Activated CD4-positive, alpha-beta memory T cell treated with anti-CD3 and anti-CD28 coated beads for 36 hours (primary cell): ENCODE measurements at regions of chr14 and their contacts with region 1.

Region 1: GRCh38 chr14:81220830-81221578 is at the start of gene GTF2A1:
- DNase-seq: peak; percentile 96
- H3K4me3 Mint-ChIP-seq: peak within 1 kb of the TSS; percentile 96
- H3K27ac Mint-ChIP-seq: peak within 1 kb of the TSS; percentile 97
- H3K4me1 Mint-ChIP-seq: peaks cover 34% of the 10 kb centered on the region
- H3K27me3 Mint-ChIP-seq: peaks cover 2% of the 10 kb centered on the region
- total RNA-seq, gene GTF2A1: 38.9 to 40.1 TPM

Region 2: GRCh38 chr14:80930836-80931389 is 290.1 kb before region 1 on chr14:
- CTCF ChIA-PET with region 1: no interaction called
- POLR2A ChIA-PET with region 1: interaction called, 4 read pairs
- intact Hi-C with region 1: loop called (anchors 1 kb)
- DNase-seq: peak; percentile 80
- H3K4me3 Mint-ChIP-seq: peak overlapping the region; percentile 54
- H3K27ac Mint-ChIP-seq: peak overlapping the region; percentile 82
- H3K4me1 Mint-ChIP-seq: peaks cover 41% of the 10 kb centered on the region
- H3K27me3 Mint-ChIP-seq: no peaks in the 10 kb centered on the region

Region 3: DNA sequence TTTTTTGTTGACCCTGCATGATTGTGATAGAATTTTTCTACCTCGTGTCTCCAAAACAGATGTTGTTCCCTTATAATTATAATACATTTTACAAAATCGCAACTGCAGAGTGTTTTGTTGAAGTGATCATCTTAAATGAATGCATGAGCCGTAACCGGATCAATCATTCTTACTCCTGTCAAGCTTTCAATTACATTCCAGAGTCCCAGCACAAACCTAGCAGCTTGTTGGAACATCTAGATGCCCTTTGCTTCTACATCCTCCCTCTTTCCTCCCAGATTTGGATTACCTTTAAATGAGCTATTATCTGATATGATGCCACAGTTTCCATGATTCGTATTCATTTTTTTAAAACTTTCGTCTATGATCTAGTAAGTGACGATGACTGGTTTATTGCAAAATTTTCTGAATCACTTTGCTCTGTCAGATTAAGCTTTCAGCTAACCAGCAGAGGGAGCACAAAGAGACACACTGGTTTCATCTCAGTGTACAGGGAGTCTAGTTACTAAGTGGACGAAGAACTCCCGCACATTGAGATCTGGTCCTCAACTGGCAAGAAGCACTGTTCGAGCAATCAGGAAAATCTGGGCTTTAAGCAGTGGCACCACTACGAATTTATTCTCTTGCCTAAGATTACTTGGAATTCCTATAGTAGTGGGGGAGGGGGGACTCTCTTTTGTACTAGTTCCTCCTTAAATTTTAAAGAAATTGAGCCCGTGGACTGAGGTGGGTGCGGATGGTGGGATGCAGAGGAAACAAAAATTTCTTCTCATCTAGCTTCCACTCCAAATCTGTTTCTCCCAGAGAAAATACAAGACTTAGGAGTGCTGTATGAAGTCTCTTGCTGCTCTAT is 224.7 kb before region 1 on chr14:
- CTCF ChIA-PET with region 1: interaction called, 5 read pairs
- POLR2A ChIA-PET with region 1: no interaction called
- intact Hi-C with region 1: loop called (anchors 5 kb)
- DNase-seq: peak; percentile 20
- H3K4me3 Mint-ChIP-seq: no peak overlapping the region
- H3K27ac Mint-ChIP-seq: no peak overlapping the region
- H3K4me1 Mint-ChIP-seq: peaks cover 7% of the 10 kb centered on the region
- H3K27me3 Mint-ChIP-seq: peaks cover 15% of the 10 kb centered on the region

Region 4: DNA sequence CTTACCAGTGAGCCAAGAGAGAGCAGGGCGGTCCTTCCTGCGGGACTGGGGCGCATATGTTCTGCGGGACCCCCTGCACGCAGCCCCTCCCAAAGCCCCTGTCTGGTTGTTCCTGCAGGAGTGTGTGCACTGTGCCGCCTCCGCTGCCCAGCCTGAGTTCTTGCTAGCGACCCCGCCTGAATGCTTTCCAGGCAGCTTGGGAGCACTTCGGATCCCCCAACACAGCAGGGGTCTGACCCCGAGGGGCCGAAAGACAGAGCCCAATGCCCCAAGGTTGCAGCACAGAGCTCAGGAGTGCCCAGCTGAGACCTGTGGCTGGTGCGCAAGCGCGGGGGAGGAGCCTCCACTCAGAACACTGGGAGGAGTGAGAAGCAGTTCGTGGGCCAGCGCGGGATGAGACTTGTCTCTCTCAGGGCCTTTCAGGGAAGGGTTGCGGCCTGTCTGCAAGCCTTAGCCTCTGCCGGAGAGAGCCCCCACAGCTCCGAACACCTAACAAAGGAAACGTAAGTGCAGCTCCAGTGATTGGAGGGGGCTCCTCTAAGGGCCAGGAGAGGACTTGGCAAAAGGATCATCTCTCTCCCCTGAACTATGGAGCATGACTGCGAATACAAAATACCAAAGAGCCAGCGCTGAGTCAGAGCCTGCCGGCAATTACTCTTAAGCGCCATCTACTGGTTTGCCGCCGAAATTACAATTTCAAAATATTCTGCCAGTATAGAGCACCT is 50.7 kb before region 1 on chr14:
- CTCF ChIA-PET with region 1: interaction called, 5 read pairs
- POLR2A ChIA-PET with region 1: interaction called, 7 read pairs
- intact Hi-C with region 1: loop called (anchors 1 kb)
- DNase-seq: peak; percentile 92
- H3K4me3 Mint-ChIP-seq: peak overlapping the region; percentile 85
- H3K27ac Mint-ChIP-seq: peak overlapping the region; percentile 93
- H3K4me1 Mint-ChIP-seq: peaks cover 17% of the 10 kb centered on the region
- H3K27me3 Mint-ChIP-seq: no peaks in the 10 kb centered on the region

Region 5: DNA sequence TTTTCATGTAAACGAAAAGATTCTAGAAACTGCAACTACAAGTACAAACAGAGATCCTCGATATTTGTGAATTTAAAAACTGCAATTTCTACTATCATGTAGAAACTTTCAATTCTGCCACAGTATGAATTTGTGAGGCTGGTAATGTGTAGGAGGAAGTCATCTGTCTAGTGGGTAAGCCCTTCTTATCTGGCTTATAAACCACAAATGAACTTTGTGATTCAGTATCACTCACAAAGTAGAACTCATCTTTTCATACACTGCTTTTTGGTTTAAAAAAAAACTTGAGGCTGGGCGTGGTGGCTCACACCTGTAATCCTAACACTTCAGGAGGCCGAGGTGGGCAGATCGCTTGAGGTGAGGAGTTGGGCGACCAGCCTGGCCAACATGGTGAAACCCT is 20.9 kb before region 1 on chr14:
- CTCF ChIA-PET with region 1: no interaction called
- POLR2A ChIA-PET with region 1: interaction called, 5 read pairs
- intact Hi-C with region 1: loop called (anchors 2 kb)
- DNase-seq: no peak
- H3K4me3 Mint-ChIP-seq: no peak overlapping the region
- H3K27ac Mint-ChIP-seq: peak overlapping the region; percentile 54
- H3K4me1 Mint-ChIP-seq: peaks cover 22% of the 10 kb centered on the region
- H3K27me3 Mint-ChIP-seq: no peaks in the 10 kb centered on the region

Region 6: GRCh38 chr14:81474148-81474492 is 253.1 kb after region 1 on chr14:
- CTCF ChIA-PET with region 1: no interaction called
- POLR2A ChIA-PET with region 1: interaction called, 3 read pairs
- intact Hi-C with region 1: loop called (anchors 2 kb)
- DNase-seq: no peak
- H3K4me3 Mint-ChIP-seq: peak overlapping the region; percentile 36
- H3K27ac Mint-ChIP-seq: peak overlapping the region; percentile 80
- H3K4me1 Mint-ChIP-seq: peaks cover 48% of the 10 kb centered on the region
- H3K27me3 Mint-ChIP-seq: no peaks in the 10 kb centered on the region